A673 (cell line): ENCODE measurements at regions of chr19 and their contacts with region 1.

Region 1: DNA sequence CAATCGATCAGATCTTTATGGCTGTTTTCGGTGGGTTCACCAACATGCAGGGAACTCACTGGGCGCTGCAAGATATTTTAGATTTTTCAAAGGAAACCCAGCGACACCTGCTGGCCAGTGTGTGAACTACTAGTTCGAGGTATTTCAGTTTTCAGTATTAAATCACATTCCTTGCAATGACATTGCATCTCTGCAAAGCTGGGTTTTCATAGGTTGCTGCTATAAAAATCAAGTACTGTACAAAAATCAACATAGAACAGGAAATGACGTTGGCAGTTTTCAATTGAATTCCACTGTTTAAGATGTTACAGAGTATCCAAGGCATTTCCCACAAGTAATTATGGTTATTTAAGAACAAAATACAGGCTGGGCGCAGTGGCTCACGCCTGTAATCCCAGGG is 17.6 kb downstream of the LIG1 start:
- DNase-seq: peak; percentile 97
- H3K4me3 ChIP-seq: no peak overlapping the region
- H3K27ac ChIP-seq: peak overlapping the region; percentile 94
- H3K4me1 ChIP-seq: peaks cover 26% of the 10 kb centered on the region
- H3K27me3 ChIP-seq: no peaks in the 10 kb centered on the region
- CTCF ChIP-seq: peak; percentile 88

Region 2: GRCh38 chr19:47839913-47840312 is 312.6 kb before region 1 on chr19:
- CTCF ChIA-PET with region 1: no interaction called
- POLR2A ChIA-PET with region 1: no interaction called
- intact Hi-C with region 1: no loop called
- DNase-seq: no peak
- H3K4me3 ChIP-seq: no peak overlapping the region
- H3K27ac ChIP-seq: no peak overlapping the region
- H3K4me1 ChIP-seq: no peaks in the 10 kb centered on the region
- H3K27me3 ChIP-seq: no peaks in the 10 kb centered on the region
- CTCF ChIP-seq: no peak

Region 3: DNA sequence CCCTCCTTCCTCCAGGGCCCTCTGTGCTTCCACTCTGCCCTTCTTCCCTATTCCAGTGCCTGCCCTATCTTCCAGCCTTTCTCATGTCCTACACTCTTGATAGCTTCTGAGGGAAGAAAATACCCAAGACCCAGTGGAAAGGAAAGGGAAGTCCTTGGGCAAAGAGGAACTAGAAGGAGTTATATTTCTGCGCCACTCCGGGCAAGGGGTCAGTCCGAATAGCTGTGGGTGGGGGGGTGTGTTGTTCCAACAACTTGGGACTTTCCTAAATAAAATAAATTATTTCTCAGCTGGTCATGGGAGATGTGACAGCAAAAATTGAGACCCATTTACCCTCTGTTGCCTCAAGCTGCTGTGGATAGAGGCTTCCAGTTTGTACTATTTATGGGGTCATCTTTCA is 131.9 kb before region 1 on chr19:
- CTCF ChIA-PET with region 1: no interaction called
- POLR2A ChIA-PET with region 1: no interaction called
- intact Hi-C with region 1: no loop called
- DNase-seq: no peak
- H3K4me3 ChIP-seq: no peak overlapping the region
- H3K27ac ChIP-seq: no peak overlapping the region
- H3K4me1 ChIP-seq: no peaks in the 10 kb centered on the region
- H3K27me3 ChIP-seq: peaks cover 15% of the 10 kb centered on the region
- CTCF ChIP-seq: no peak

Region 4: GRCh38 chr19:48110350-48110966 is 42.1 kb before region 1 on chr19 and contains the start of gene PLA2G4C:
- CTCF ChIA-PET with region 1: interaction called, 10 read pairs
- POLR2A ChIA-PET with region 1: no interaction called
- intact Hi-C with region 1: loop called (anchors 1 kb)
- DNase-seq: peak; percentile 95
- H3K4me3 ChIP-seq: peak within 1 kb of the TSS; percentile 39
- H3K27ac ChIP-seq: peak within 1 kb of the TSS; percentile 77
- H3K4me1 ChIP-seq: peaks cover 3% of the 10 kb centered on the region
- H3K27me3 ChIP-seq: no peaks in the 10 kb centered on the region
- CTCF ChIP-seq: no peak
- total RNA-seq, gene PLA2G4C: 4.8 and 8.2 TPM in 2 replicates

Region 5: GRCh38 chr19:48170038-48170812 is 17.7 kb after region 1 on chr19 and contains the starts of genes LIG1 and ZSWIM9:
- CTCF ChIA-PET with region 1: no interaction called
- POLR2A ChIA-PET with region 1: interaction called, 13 read pairs
- intact Hi-C with region 1: no loop called
- DNase-seq: peak; percentile 97
- H3K4me3 ChIP-seq: peak within 1 kb of the TSS; percentile 100
- H3K27ac ChIP-seq: peak within 1 kb of the TSS; percentile 99
- H3K4me1 ChIP-seq: peaks cover 20% of the 10 kb centered on the region
- H3K27me3 ChIP-seq: no peaks in the 10 kb centered on the region
- CTCF ChIP-seq: no peak
- total RNA-seq, gene LIG1: 200 and 204 TPM in 2 replicates
- total RNA-seq, gene ZSWIM9: 12.0 and 15.8 TPM in 2 replicates

Region 6: DNA sequence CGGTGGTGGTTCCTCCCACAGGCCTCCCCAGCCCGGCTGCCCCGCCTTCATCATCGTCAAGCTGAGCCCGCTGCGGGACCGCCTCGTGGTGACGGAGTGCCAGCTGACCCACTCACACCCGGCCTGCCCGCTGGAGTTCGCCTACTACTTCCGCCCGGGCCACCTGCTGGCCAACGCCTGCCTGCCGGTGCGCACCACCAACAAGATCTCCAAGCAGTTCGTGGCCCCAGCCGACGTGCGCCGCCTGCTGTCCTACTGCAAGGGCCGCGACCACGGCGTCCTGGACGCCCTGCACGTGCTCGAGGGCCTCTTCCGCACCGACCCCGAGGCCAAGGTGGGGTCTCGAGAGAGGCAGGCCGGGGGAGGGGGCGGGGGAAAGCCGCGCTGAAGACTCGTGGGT is 29.9 kb after region 1 on chr19:
- CTCF ChIA-PET with region 1: no interaction called
- POLR2A ChIA-PET with region 1: no interaction called
- intact Hi-C with region 1: no loop called
- DNase-seq: no peak
- H3K4me3 ChIP-seq: no peak overlapping the region
- H3K27ac ChIP-seq: no peak overlapping the region
- H3K4me1 ChIP-seq: no peaks in the 10 kb centered on the region
- H3K27me3 ChIP-seq: no peaks in the 10 kb centered on the region
- CTCF ChIP-seq: 0 out of 2 replicates have a peak, but pooled peaks have one; percentile 21

Region 7: GRCh38 chr19:48203732-48204628 is 51.4 kb after region 1 on chr19:
- CTCF ChIA-PET with region 1: no interaction called
- POLR2A ChIA-PET with region 1: interaction called, 13 read pairs
- intact Hi-C with region 1: no loop called
- DNase-seq: peak; percentile 99
- H3K4me3 ChIP-seq: peak overlapping the region; percentile 57
- H3K27ac ChIP-seq: peak overlapping the region; percentile 72
- H3K4me1 ChIP-seq: peaks cover 6% of the 10 kb centered on the region
- H3K27me3 ChIP-seq: no peaks in the 10 kb centered on the region
- CTCF ChIP-seq: no peak

Region 8: DNA sequence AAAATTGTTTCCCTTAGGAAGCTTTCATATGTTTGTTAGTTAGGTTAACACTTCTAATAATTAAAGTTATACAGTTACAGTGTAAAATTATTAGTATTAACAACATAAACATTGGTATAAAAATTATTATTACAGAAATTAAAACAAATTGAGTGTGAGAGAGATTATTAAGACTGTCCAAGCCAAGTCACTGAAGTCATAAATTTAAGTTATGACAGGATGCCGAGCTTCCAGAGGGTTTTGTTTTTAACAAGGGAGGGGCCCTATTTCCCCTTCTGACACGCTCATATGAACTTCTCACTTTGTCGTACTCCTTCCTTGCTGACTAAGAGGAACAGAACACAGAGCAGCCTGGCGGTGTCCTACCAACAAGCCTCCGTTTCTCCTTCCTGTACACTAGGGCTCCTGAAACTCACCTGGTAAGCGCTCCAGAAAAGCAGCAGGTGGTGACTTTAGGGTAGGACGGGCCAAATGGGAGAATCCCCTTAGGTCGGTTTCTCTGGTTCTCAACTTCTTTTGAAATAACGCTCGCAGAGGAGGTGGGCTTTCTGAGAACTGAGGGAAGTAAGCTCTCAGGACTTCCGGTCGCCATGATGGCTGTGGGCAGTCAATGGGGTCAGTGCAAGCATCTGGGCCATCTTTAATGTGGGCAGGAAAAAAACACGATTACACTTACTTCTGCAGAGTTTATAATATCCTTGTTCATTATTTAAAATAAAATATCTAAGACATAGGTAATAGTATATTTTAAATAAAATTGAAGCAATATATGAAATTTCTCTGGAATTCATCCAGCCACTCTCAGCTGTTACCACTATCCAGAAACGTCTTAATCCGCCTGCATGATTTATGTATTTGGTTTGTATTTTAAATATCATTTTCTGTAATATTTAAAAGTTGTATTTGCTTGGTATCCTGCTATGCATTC is 103.1 kb after region 1 on chr19 and contains the start of gene CARD8:
- CTCF ChIA-PET with region 1: interaction called, 3 read pairs
- POLR2A ChIA-PET with region 1: no interaction called
- intact Hi-C with region 1: loop called (anchors 1 kb)
- DNase-seq: peak; percentile 94
- H3K4me3 ChIP-seq: peak within 1 kb of the TSS; percentile 77
- H3K27ac ChIP-seq: peak within 1 kb of the TSS; percentile 97
- H3K4me1 ChIP-seq: peaks cover 48% of the 10 kb centered on the region
- H3K27me3 ChIP-seq: no peaks in the 10 kb centered on the region
- CTCF ChIP-seq: no peak
- total RNA-seq, gene CARD8: 139 and 151 TPM in 2 replicates